Mucosa of descending colon (tissue), 3 donors: ENCODE measurements at regions of chr3 and their contacts with region 1.

Region 1: DNA sequence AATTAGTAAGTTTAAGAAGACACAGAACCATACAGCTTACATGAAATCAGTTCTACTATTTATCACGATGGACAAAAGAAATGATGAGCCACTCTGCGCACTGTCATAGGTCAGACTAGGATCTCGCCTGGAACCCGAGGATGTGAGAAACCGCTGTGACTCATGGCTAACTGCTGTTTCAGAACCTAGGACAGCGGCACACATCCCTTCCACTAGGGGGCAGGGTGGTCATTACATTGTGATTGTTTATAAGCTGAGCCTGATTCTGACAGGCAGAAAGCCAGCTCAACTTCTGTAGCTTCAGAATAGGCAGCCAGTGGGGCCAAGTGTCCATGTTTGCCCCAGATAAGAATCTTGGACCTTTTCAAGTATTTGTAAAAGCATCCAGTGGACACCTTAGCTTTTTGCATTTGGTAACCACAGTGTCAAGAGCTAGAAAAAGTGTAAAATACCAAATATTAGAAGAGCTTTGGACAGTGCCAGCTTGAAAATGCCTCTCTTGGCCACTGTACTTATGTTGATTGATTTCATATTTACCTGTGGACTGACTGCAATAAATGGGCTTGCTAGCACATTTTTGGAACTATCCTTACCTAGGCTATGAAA is 115.8 kb downstream of the KBTBD8 start:
- DNase-seq: peak; percentile 43 to 93 (median 78)
- ATAC-seq: peak; percentile 94
- H3K4me3 ChIP-seq: no peak overlapping the region
- H3K4me1 ChIP-seq: no peaks in the 10 kb centered on the region
- CTCF ChIP-seq: peak; percentile 67

Region 2: GRCh38 chr3:66712210-66712609 is 401.7 kb before region 1 on chr3:
- intact Hi-C with region 1: no loop called
- DNase-seq: no peak
- ATAC-seq: peak; percentile 57
- H3K4me3 ChIP-seq: no peak overlapping the region
- H3K4me1 ChIP-seq: no peaks in the 10 kb centered on the region
- CTCF ChIP-seq: no peak

Region 3: DNA sequence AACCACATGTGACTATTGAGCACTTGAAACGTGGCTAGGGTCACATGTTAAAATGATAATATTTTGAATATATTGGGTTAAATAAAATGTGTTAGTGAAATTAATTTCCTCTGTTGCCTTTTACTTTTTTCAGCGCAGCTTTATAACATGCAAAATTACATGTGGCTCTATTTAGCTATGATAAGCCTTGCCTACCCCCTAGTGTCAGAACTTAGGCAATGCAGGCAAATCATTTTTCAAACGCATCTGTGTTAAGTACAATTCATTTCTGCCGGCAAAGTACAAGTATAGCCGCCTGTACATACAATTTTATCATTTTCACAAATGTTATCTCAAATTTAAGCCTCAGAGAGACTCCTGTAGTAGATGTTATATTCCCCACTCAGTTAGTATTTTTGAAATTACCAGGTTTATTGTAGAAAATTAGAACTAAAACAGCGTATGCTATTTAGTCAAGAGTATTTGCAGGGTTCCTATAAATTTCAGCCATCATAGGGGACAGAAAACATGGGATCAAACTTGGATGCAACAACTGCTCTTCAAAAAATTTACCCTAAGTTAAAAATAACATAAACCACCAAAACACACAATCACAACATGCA is 1762.3 kb after region 1 on chr3:
- intact Hi-C with region 1: loop called (anchors 10 kb)
- DNase-seq: peak in 1 of 3 donors; percentile 48
- ATAC-seq: peak; percentile 68
- H3K4me3 ChIP-seq: no peak overlapping the region
- H3K4me1 ChIP-seq: no peaks in the 10 kb centered on the region
- CTCF ChIP-seq: peak; percentile 56